ENCODE measurements at regions of chr1 and their contacts with region 1.

Region 1: DNA sequence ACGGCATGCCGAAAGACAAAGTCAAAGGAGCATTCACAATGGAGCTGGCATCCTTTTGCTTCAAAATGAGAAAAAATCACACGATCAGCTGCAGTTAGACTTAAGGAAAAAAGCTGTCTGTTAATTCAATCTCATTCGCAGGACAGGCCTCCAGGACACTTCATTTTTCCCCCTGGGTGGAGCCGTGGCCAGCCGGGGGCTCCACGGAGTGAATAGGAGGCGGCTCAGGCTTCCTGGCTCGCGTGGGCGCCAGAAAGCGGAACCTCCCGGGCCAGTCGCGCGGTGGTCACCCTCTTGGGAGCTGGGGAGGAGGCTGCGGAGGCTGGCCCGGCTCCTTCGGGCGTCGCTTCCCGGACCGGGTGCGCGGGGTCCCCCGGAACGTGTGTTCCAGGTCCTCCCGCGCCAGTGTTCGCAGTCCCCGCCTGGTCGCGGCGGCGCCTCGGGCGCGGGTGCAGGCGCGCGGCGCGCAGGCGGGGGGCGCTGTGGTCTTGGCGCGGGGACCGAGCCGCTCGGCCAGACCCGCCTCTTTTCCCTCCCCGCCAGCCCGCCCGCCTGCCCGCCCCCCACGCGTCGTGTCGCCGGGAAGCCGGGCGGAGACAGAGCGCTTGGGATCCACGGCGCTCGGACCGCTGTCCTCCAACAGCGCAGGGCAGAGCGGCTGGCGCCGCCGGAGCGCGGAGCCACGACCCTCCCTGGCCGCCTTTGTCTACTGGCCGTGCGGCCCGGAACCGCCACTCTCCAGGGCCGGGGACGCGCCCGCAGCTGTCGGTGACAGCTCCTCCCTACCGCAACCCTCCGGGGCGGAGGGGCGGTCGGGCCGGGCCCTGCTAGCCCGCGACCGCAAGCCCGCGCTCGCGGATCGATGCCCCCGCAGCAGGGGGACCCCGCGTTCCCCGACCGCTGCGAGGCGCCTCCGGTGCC is at the start of gene RHOU:
- DNase-seq: peak; percentile 79 to 96 (median 83)
- ATAC-seq: peak; percentile 94
- H3K4me3 ChIP-seq: peak within 1 kb of the TSS; percentile 67 to 94
- H3K27ac ChIP-seq: peak within 1 kb of the TSS; percentile 85 to 87
- H3K4me1 ChIP-seq: peaks cover 16 to 45% of the 10 kb centered on the region in 2 donors
- H3K27me3 ChIP-seq: peaks cover 0 to 18% of the 10 kb centered on the region in 2 donors
- CTCF ChIP-seq: peak; percentile 81 to 89
- polyA plus RNA-seq, gene RHOU: 48.5 to 69.4 (median 60.7) TPM

Region 2: GRCh38 chr1:228197555-228198147 is 537.5 kb before region 1 on chr1:
- intact Hi-C with region 1: no loop called
- DNase-seq: peak in 1 of 4 donors; percentile 1
- ATAC-seq: no peak
- H3K4me3 ChIP-seq: no peak overlapping the region
- H3K27ac ChIP-seq: no peak overlapping the region
- H3K4me1 ChIP-seq: no peaks in the 10 kb centered on the region
- H3K27me3 ChIP-seq: no peaks in the 10 kb centered on the region
- CTCF ChIP-seq: no peak

Region 3: DNA sequence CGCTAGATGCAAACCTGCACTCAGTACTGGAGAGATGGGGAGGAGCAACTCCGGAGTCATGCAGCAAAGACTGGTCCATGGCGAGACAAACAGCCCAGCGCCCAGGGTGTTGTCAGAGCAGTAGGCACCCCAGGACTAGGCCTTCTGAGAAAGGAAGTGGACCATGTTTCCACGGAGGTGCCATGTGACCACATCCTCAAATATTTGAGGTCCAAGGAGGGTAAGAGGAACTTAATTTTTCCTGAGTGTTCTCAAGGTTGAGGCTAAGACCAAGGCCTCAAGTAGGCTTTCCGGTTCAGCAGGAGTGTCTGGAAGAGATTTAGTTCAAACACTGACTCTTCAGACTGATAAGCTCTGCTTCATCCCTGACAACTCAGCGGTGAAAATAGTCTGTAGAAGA is 186.3 kb after region 1 on chr1:
- intact Hi-C with region 1: loop called in 1 of 2 experiments (anchors 10 kb)
- DNase-seq: peak in 2 of 4 donors; percentile 41 to 73
- ATAC-seq: peak; percentile 89
- H3K4me3 ChIP-seq: no peak overlapping the region
- H3K27ac ChIP-seq: peak overlapping the region in 1 of 2 donors; percentile 55
- H3K4me1 ChIP-seq: peaks cover 0 to 30% of the 10 kb centered on the region in 2 donors
- H3K27me3 ChIP-seq: no peaks in the 10 kb centered on the region
- CTCF ChIP-seq: no peak

Region 4: GRCh38 chr1:229227298-229227919 is 492.3 kb after region 1 on chr1:
- intact Hi-C with region 1: loop called in 1 of 2 experiments (anchors 10 kb)
- DNase-seq: peak; percentile 56 to 95 (median 78)
- ATAC-seq: peak; percentile 75
- H3K4me3 ChIP-seq: no peak overlapping the region
- H3K27ac ChIP-seq: no peak overlapping the region
- H3K4me1 ChIP-seq: peaks cover 16 to 33% of the 10 kb centered on the region in 2 donors
- H3K27me3 ChIP-seq: peaks cover 0 to 21% of the 10 kb centered on the region in 2 donors
- CTCF ChIP-seq: peak; percentile 80 to 82